ENCODE measurements at regions of chr15 and their contacts with region 1.

Region 1: DNA sequence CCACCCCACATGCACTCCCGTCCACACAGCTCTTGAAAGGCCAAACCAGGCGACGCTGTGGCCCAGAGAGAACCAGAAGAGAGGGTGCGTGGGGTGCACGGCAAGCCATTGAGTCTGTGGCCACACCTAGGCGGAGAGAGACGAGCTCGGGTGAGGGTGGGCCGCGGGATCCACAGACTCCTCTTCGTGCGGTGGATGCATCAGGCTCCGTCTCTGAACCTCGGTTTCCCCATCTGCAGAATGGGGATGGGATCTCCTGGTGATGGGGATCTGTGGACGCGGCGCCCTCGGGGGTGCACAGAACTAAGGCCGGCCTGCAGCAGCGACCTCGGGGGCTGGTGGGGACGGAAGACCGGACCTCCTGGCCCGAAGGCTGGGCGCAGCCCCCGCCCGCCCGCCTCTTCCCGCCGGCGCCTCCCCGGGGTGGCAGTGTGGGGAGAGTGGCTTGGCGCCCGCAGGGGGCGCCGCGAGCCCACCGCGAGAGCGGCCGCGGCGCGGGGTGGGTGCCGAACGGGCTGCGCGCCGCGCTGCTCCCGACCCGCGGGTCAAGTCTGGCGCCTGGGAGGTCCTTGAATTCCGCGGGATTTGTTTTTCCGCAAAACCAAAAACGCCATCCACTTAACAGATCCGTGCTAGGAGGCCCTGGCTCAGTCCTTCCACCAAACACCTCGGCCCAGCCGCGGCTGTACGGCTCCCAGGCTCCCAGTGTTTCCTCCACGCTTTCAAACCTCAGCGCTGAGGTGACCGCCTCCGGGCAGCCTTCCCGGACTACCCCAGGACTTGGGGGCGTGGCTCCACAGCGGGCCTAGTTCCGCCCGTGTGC is 13.2 kb upstream of the ADPGK start:
- DNase-seq: no peak
- H3K4me3 ChIP-seq: peak overlapping the region; percentile 26 to 55 (median 47)
- H3K27ac ChIP-seq: peak overlapping the region in 1 of 4 donors; percentile 27
- H3K4me1 ChIP-seq: peaks cover 0 to 12% (median 8%) of the 10 kb centered on the region in 4 donors
- H3K27me3 ChIP-seq: no peaks in the 10 kb centered on the region
- CTCF ChIP-seq: peak in 2 of 4 experiments; percentile 23 to 77
- EP300 ChIP-seq: no peak
- POLR2A ChIP-seq: no peak

Region 2: DNA sequence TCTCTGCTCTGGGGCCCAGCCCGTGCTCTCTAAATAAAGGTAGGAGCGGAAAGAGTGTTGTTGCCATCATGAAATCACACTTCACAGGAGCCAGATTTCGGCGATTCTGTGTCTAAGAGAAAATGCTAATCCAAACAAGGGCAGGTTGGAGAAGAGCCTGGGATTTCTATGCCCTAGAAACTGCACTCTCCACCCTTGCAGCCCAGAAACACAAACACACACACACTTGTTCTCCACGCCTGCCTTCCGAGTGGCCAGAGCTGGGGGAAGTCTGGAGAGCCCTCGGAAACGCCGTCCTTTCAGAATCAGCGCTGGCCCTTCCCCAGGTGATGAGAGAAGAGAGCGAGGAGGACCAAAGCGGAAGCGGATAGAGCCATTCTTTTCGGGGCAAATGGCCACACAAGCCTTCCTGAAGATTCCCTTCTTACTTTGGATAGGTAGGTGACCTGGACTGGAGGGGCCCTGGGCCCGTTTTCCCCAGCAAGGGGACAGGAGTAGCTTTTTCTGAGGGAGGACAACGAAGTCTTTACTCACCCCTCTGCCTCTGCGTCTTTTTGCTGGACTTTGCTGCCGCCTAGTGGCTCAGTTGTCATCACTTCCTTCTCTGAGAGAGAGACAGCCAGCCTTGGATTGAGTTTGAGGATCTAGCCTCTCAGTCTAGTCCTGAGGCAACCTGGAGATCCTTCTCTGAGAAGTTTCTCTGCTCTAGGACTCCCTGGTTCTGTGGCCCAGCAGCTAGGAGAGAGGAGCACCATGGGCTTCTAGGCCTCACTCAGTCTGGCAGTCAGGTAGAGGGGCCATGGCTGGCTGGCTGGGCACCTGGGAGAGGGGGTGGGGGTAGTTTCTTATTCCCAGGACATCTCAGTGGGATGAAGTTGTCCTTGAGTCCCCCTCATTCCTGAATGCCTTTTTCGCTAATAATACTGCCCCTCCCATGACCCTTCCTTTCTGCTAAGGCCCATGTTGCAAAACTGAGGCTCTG is 640.8 kb before region 1 on chr15:
- intact Hi-C with region 1: no loop called
- DNase-seq: peak; percentile 89
- H3K4me3 ChIP-seq: peak overlapping the region; percentile 24 to 58 (median 48)
- H3K27ac ChIP-seq: peak overlapping the region; percentile 70 to 87 (median 76)
- H3K4me1 ChIP-seq: peaks cover 0 to 30% (median 22%) of the 10 kb centered on the region in 4 donors
- H3K27me3 ChIP-seq: no peaks in the 10 kb centered on the region
- CTCF ChIP-seq: peak; percentile 78 to 90 (median 82)
- EP300 ChIP-seq: no peak
- POLR2A ChIP-seq: no peak

Region 3: DNA sequence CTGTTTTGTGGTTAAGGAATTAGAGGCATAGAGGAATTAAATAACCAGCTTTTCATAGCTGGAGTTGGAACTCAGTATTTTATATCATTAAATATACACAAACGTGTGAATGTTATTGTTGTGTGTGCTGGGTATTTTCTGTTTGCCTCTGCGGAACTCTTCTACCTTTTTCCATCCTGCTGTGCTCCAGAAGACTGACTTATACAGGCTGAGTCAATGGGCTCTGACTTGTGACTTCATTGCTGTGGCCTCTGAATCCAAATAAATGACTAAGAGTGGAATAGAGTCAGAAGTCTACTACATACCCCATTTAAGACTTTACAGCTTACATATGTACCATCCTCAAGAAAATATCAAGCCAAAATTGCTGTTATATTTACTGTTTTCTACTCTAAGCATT is 305.0 kb before region 1 on chr15:
- intact Hi-C with region 1: no loop called
- DNase-seq: no peak
- H3K4me3 ChIP-seq: no peak overlapping the region
- H3K27ac ChIP-seq: no peak overlapping the region
- H3K4me1 ChIP-seq: peaks cover 0 to 100% (median 79%) of the 10 kb centered on the region in 4 donors
- H3K27me3 ChIP-seq: no peaks in the 10 kb centered on the region
- CTCF ChIP-seq: no peak
- EP300 ChIP-seq: no peak
- POLR2A ChIP-seq: no peak

Region 4: GRCh38 chr15:72685925-72686794 is 110.6 kb before region 1 on chr15 and contains the starts of genes BBS4 and HIGD2B:
- intact Hi-C with region 1: no loop called
- DNase-seq: peak; percentile 90
- H3K4me3 ChIP-seq: peak within 1 kb of the TSS; percentile 56 to 81 (median 65)
- H3K27ac ChIP-seq: peak within 1 kb of the TSS; percentile 84 to 93 (median 90)
- H3K4me1 ChIP-seq: peaks cover 0 to 15% (median 8%) of the 10 kb centered on the region in 4 donors
- H3K27me3 ChIP-seq: no peaks in the 10 kb centered on the region
- CTCF ChIP-seq: no peak
- EP300 ChIP-seq: no peak
- POLR2A ChIP-seq: peak; percentile 58 to 60
- total RNA-seq, gene BBS4: 18.3 to 34.3 (median 29.0) TPM
- total RNA-seq, gene HIGD2B: not detected

Region 5: GRCh38 chr15:72749700-72750099 is 47.0 kb before region 1 on chr15:
- intact Hi-C with region 1: no loop called
- DNase-seq: no peak
- H3K4me3 ChIP-seq: no peak overlapping the region
- H3K27ac ChIP-seq: no peak overlapping the region
- H3K4me1 ChIP-seq: no peaks in the 10 kb centered on the region
- H3K27me3 ChIP-seq: no peaks in the 10 kb centered on the region
- CTCF ChIP-seq: no peak
- EP300 ChIP-seq: no peak
- POLR2A ChIP-seq: no peak

Region 6: GRCh38 chr15:73081321-73081958 is 284.7 kb after region 1 on chr15:
- intact Hi-C with region 1: loop called (anchors 2 kb)
- DNase-seq: no peak
- H3K4me3 ChIP-seq: no peak overlapping the region
- H3K27ac ChIP-seq: no peak overlapping the region
- H3K4me1 ChIP-seq: peaks cover 0 to 36% (median 22%) of the 10 kb centered on the region in 4 donors
- H3K27me3 ChIP-seq: no peaks in the 10 kb centered on the region
- CTCF ChIP-seq: peak; percentile 45 to 64 (median 54)
- EP300 ChIP-seq: no peak
- POLR2A ChIP-seq: no peak

Region 7: GRCh38 chr15:73273181-73274002 is 476.7 kb after region 1 on chr15:
- intact Hi-C with region 1: loop called (anchors 5 kb)
- DNase-seq: peak; percentile 71
- H3K4me3 ChIP-seq: no peak overlapping the region
- H3K27ac ChIP-seq: no peak overlapping the region
- H3K4me1 ChIP-seq: peaks cover 0 to 8% (median 3%) of the 10 kb centered on the region in 4 donors
- H3K27me3 ChIP-seq: no peaks in the 10 kb centered on the region
- CTCF ChIP-seq: peak; percentile 21 to 79 (median 64)
- EP300 ChIP-seq: no peak
- POLR2A ChIP-seq: no peak